ENCODE measurements at regions of chr2 and their contacts with region 1.

Region 1: DNA sequence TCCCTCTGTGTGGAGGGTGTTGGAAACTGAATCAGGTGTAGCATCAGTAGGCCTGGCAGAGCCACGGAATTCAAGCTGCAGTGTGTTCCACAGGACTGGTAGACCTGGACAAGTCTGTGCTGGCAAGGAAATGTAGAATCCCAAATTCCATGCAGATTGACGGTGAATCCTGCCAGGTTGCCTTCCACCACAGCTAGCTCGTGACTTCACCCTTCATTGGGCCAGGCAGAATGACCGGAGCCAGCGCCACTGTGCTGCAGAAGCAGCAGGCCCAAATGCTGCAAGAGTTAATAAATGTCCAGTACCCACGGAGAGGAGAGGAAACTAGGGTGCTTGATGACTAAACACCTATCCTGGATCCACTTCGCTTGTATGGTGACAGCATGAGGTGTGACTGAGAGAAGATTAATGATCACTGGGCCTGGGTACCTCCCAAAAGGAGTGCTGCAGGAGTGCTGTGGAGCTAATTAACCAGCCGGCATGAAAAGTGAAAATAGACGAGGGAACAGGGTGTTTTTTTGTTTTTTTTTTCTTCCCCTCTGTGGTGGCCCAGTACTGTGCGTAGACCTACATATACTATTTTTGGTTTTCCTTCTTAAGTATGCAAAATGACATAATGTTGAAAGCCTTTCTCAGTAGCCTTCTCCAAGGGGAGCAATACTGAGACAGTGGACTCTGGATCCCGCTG is 122.2 kb downstream of the TANC1 start:
- DNase-seq: no peak
- H3K4me3 ChIP-seq: no peak overlapping the region
- H3K27ac ChIP-seq: peak overlapping the region in 3 of 5 donors; percentile 2 to 56 (median 42)
- H3K4me1 ChIP-seq: peaks cover 19 to 67% of the 10 kb centered on the region in 2 donors
- H3K27me3 ChIP-seq: no peaks in the 10 kb centered on the region
- CTCF ChIP-seq: no peak
- POLR2A ChIP-seq: no peak

Region 2: GRCh38 chr2:159044804-159045286 is 45.8 kb before region 1 on chr2:
- intact Hi-C with region 1: loop called in 1 of 2 experiments (anchors 10 kb)
- DNase-seq: peak in 6 of 7 donors; percentile 34 to 77 (median 69)
- H3K4me3 ChIP-seq: no peak overlapping the region
- H3K27ac ChIP-seq: peak overlapping the region in 2 of 5 donors; percentile 33 to 59
- H3K4me1 ChIP-seq: peaks cover 0 to 36% of the 10 kb centered on the region in 2 donors
- H3K27me3 ChIP-seq: no peaks in the 10 kb centered on the region
- CTCF ChIP-seq: no peak
- POLR2A ChIP-seq: no peak

Measured in adrenal gland (tissue), 19 donors.